Mammary epithelial cell (primary cell): ENCODE measurements at regions of chr17 and their contacts with region 1.

Region 1: DNA sequence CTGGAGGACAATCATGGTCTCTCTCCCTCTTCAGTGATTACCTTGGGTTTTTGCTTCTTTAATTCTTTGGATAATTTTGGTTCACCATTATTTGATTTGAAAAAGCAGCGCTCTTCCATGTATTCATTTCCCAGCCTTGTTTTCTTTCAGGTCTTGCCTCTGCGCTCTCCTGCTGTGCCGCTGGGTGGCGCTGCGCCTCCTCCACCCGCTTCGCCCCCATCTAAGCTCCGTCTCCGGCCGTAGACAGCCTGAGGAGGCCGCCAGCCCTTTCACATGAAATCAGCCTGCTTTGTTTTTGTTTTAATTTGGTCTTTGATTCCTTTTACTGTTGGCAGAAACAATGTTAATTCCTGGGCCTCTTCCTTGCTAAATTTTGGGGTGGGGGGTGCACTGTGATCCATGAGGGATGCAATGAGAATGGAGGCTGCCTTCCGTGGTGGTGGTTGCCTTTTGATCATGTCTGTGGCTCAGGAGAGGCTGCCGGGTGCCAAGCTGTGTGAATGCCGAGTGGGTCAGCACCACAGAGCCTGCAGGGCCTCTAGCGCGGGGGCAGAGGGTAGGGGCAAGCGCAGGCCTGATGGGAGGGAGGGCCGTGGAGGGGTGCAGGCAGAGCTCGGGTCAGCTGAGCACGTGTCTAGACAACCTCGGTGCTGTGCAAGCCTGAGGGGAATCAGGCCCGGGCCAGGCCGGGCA is 64.1 kb downstream of the PLD6 start:
- DNase-seq: peak; percentile 18
- H3K4me3 ChIP-seq: no peak overlapping the region
- H3K27ac ChIP-seq: no peak overlapping the region
- H3K4me1 ChIP-seq: peaks cover 35% of the 10 kb centered on the region
- H3K27me3 ChIP-seq: no peaks in the 10 kb centered on the region
- CTCF ChIP-seq: peak; percentile 98

Region 2: DNA sequence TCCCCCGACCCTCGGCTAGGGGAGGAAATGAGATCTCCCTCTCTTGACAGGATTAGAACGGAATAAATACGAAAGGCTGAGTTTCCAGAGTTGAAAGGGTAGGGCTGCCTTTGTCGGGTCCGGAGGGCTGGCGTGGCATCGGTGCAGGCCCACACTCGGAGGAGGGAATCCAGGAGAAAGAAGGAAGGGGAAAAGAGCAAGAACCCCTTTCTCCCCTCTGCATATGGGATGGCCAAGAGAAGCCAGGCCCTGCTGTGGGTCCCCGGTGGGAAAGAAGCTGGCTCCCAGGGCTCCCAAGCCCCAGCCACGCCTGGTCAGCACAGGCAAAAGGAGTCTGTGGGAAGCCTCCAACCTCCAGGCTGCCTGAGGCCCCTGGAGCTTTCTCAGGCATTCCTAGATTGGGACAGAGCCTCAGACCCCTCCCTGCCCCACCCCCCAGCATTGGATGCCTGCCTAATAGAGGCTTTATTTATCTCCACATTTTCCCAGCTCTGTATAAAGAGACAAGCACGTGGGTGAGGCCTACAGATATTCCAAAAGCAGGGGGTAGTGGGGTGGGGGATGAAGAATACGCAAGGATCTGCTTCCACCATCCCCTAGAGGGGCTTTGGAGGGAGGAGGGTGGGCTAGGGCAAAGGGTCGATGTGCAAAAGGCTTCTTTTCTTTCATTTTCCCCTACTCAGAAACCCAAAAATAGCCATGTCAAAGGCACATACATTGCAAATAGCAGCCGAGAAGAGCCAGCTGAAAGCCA is 43.4 kb before region 1 on chr17:
- CTCF ChIA-PET with region 1: no interaction called
- dilution Hi-C with region 1: loop called (anchors 5 kb)
- in situ Hi-C with region 1: no loop called
- intact Hi-C with region 1: no loop called
- DNase-seq: no peak
- H3K4me3 ChIP-seq: no peak overlapping the region
- H3K27ac ChIP-seq: no peak overlapping the region
- H3K4me1 ChIP-seq: peaks cover 31% of the 10 kb centered on the region
- H3K27me3 ChIP-seq: no peaks in the 10 kb centered on the region
- CTCF ChIP-seq: no peak

Region 3: GRCh38 chr17:17206124-17206912 is 64.3 kb after region 1 on chr17 and contains the start of gene PLD6:
- CTCF ChIA-PET with region 1: no interaction called
- dilution Hi-C with region 1: loop called (anchors 5 kb)
- in situ Hi-C with region 1: no loop called
- intact Hi-C with region 1: no loop called
- DNase-seq: peak; percentile 59
- H3K4me3 ChIP-seq: peak within 1 kb of the TSS; percentile 14 to 64 (median 53)
- H3K27ac ChIP-seq: no peak within 1 kb of the TSS
- H3K4me1 ChIP-seq: peaks cover 32% of the 10 kb centered on the region
- H3K27me3 ChIP-seq: no peaks in the 10 kb centered on the region
- CTCF ChIP-seq: no peak
- total RNA-seq, gene PLD6: 1.8 to 4.3 TPM

Region 4: GRCh38 chr17:17237026-17237799 is 95.2 kb after region 1 on chr17 and contains the start of gene FLCN:
- CTCF ChIA-PET with region 1: no interaction called
- dilution Hi-C with region 1: no loop called
- in situ Hi-C with region 1: no loop called
- intact Hi-C with region 1: loop called (anchors 2 kb)
- DNase-seq: peak; percentile 81
- H3K4me3 ChIP-seq: peak within 1 kb of the TSS; percentile 68 to 78 (median 71)
- H3K27ac ChIP-seq: peak within 1 kb of the TSS; percentile 97
- H3K4me1 ChIP-seq: peaks cover 12% of the 10 kb centered on the region
- H3K27me3 ChIP-seq: no peaks in the 10 kb centered on the region
- CTCF ChIP-seq: no peak
- total RNA-seq, gene FLCN: 41.7 to 59.0 TPM

Region 5: DNA sequence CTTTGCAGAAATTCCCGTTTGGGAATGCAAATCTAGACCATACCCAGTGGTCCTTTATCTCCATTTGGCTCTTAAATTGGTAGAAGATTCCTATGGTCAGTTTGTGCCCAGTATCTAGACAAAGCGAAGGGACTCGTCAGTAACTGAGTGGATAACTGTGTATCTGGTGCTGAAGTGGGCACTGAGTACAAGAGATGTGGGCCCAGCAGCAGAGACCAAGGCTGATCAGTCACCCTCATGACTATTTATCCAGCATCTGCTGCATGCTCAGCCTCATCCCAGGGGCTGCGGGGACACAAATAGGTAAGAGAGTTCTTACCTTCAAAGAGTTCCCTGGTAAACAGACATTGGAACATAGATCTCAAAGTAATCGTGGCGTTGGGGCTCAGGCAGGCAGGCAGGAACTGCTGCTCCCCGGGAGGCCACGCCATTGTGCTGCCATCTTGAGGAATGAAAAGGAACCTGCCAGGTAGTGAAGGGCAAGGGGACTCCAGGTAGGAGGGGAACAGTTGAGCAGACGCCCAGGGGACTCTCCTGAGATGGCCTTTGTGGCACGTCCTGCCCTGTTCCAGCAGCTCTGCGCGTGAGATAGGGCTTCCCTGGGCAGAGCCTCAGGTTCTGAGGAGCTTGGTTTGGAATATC is 171.5 kb after region 1 on chr17:
- CTCF ChIA-PET with region 1: no interaction called
- dilution Hi-C with region 1: no loop called
- in situ Hi-C with region 1: loop called in 1 of 2 experiments (anchors 25 kb)
- intact Hi-C with region 1: loop called (anchors 1 kb)
- DNase-seq: peak; percentile 45
- H3K4me3 ChIP-seq: no peak overlapping the region
- H3K27ac ChIP-seq: no peak overlapping the region
- H3K4me1 ChIP-seq: no peaks in the 10 kb centered on the region
- H3K27me3 ChIP-seq: no peaks in the 10 kb centered on the region
- CTCF ChIP-seq: peak; percentile 76 to 89

Region 6: DNA sequence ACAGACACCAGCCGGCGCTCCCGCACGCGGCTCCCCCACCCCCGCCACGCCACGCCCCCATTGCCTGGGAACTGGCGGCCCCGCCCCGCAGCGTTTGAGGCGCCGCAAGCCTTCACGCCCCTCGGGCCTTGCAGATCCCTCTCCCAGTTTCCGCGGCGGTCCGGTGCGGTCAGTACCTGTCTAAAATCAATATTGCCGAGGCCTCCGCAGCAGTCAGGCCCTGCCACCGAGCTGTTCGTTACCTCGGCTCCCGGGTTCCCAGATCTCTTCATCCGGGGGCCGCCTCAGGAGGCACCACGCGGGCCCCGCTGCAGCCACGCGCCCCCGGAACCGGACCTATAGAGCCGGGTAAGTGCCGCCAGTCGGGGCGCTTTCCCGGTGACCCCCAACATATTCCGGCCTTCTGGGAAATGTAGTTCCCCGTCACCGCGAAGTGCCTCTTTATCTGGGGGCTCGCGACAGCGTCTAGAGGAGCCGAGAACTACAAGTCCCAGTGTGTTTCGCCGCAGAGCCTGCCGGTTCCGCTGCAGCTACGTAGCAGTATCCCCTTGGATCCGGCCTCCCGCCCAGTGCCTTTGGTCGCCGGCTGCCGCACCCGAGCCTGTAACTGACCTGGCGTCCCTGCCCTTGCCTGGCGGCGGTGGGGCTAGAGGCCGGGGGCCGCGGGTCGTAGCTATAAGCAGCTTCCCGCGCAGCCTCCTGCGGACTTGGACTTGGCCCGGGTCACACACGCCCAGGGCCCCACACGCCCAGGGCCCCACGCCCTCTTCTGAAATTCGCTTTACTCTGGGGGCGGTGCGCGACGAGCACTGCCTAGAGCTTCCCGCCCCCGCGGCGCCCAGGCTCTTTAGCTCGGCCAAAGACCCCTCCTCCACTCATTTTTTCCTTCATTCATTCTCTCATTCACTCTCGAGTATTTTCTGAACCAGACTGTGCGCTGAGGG is 449.6 kb after region 1 on chr17 and contains the start of gene PEMT:
- CTCF ChIA-PET with region 1: no interaction called
- dilution Hi-C with region 1: no loop called
- in situ Hi-C with region 1: no loop called
- intact Hi-C with region 1: no loop called
- DNase-seq: peak; percentile 96
- H3K4me3 ChIP-seq: peak within 1 kb of the TSS; percentile 82 to 92 (median 85)
- H3K27ac ChIP-seq: peak within 1 kb of the TSS; percentile 73
- H3K4me1 ChIP-seq: peaks cover 9% of the 10 kb centered on the region
- H3K27me3 ChIP-seq: no peaks in the 10 kb centered on the region
- CTCF ChIP-seq: no peak
- total RNA-seq, gene PEMT: 31.0 to 34.5 TPM